Uterus (tissue), 4 donors: ENCODE measurements at regions of chr3 and their contacts with region 1.

Region 1: GRCh38 chr3:158845765-158846350 is 44.0 kb downstream of the MFSD1 start:
- DNase-seq: no peak
- H3K4me3 ChIP-seq: no peak overlapping the region
- H3K27ac ChIP-seq: no peak overlapping the region
- H3K4me1 ChIP-seq: no peaks in the 10 kb centered on the region
- H3K27me3 ChIP-seq: no peaks in the 10 kb centered on the region
- CTCF ChIP-seq: peak; percentile 51 to 68 (median 60)
- POLR2A ChIP-seq: no peak

Region 2: DNA sequence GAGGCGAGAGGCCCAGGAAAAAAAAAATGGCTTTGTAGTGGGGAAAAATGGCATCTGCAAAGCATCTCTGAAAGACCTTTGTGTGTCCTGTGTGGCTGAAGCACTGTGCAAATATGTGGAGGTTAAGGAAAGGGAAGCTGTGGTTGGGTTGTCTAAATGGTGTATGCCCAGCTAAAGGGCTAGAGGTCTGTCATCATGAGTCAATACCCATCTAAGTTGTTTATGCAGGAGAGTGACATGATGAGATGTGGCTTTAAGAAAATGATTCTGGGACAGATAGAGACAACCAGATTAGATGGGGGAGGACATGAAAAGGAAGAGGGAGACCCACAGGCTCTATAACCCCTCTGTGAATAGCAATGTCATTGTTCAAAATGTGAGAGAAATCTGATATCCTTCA is 236.7 kb after region 1 on chr3:
- intact Hi-C with region 1: no loop called
- DNase-seq: no peak
- H3K4me3 ChIP-seq: no peak overlapping the region
- H3K27ac ChIP-seq: no peak overlapping the region
- H3K4me1 ChIP-seq: no peaks in the 10 kb centered on the region
- H3K27me3 ChIP-seq: no peaks in the 10 kb centered on the region
- CTCF ChIP-seq: no peak
- POLR2A ChIP-seq: no peak

Region 3: DNA sequence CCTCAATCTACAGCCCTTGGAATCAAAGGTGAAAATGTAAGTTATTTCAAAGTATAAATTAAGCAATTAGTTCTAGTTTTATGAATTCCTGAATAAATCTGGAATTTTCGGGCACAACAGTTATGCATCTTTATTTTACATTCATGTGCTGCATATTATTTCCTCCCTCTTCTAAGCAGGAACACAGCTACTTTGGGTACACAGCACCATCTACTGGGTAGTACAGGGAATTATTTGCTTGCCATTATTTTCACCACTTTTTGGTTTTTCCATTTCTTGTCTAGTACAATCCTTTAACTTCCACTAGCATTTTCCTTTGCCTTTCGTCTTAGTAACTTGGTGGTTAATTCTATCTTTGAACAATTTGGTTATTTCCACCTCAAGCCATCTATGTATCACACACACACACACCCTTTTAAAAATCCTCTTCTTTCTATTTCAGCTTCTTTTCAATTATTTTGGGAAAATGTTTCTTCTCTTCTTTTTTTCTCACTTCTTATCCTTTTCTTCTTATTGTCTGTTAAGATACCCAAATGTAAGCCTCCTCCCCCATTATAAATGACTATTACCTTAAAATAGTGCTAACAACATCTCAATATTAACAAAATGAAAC is 407.0 kb after region 1 on chr3:
- intact Hi-C with region 1: loop called (anchors 10 kb)
- DNase-seq: no peak
- H3K4me3 ChIP-seq: no peak overlapping the region
- H3K27ac ChIP-seq: no peak overlapping the region
- H3K4me1 ChIP-seq: no peaks in the 10 kb centered on the region
- H3K27me3 ChIP-seq: no peaks in the 10 kb centered on the region
- CTCF ChIP-seq: peak in 1 of 4 experiments; percentile 16
- POLR2A ChIP-seq: no peak

Region 4: GRCh38 chr3:159560214-159560979 is 714.5 kb after region 1 on chr3:
- intact Hi-C with region 1: no loop called
- DNase-seq: no peak
- H3K4me3 ChIP-seq: no peak overlapping the region
- H3K27ac ChIP-seq: no peak overlapping the region
- H3K4me1 ChIP-seq: no peaks in the 10 kb centered on the region
- H3K27me3 ChIP-seq: no peaks in the 10 kb centered on the region
- CTCF ChIP-seq: no peak
- POLR2A ChIP-seq: no peak